ENCODE measurements at regions of chr1 and their contacts with region 1.

Region 1: DNA sequence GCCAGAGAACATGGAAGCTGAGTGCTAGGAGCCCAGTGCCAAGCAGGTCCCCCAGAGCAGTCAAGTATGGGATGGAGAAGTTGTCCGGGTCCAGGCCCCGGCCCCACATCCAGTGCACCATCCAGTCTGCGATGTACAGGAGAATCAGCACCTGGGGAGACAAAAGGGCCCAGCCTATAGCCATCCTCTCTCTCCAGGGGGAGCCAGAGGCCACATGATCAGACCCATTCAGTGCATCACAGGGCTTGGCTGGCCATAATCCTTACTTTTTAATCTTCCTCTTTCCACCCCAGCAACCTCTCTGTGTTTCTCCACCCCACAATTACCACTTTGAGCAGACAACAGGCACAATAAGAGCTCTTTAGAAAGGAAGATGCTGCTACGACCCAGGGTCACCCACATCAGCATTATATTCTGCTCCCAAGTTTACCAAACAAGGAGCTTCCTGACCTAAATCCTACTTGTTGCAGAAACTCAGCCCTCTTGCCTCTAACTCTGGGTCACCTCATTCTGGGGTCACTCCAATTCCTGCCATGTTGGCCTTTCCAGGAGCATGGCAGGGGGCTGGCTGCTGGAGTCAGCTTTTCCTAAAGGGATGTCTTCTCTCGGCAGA is 16.4 kb upstream of the RAB29 start:
- DNase-seq: peak; percentile 76
- H3K4me3 Mint-ChIP-seq: no peak overlapping the region
- H3K27ac Mint-ChIP-seq: no peak overlapping the region
- H3K4me1 Mint-ChIP-seq: no peaks in the 10 kb centered on the region
- H3K27me3 Mint-ChIP-seq: no peaks in the 10 kb centered on the region

Region 2: DNA sequence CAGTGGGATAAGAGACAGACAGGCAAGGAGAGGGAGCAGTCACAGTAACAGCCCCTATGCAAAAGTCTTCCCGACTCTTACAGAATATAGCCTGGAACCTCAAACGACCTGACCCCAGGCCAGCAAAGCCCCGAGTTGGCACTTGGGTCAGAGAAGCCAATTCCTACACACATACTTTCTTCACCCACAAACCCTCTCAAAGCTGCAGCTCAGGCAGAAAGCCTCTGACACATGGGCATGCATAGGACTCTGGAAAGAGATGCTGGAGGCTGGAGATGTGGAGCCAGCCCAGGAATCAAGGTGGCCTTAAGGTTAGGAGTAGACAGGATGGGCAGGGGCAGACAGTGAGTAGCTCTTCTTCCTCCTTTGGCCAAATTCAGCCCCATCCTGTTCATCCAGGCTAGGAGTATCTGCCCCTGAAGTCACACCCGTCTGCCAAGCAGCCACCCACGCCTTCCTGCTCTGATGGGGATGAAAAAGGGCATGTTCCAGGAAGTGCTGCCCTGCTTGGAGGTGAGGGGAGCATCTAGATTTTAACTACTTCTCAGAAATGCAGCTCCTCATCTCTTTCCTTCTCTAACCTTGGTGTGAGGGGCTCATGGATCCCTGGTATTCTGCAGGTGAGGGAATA is 13.5 kb after region 1 on chr1:
- CTCF ChIA-PET with region 1: interaction called, 23 read pairs
- DNase-seq: peak; percentile 41
- H3K4me3 Mint-ChIP-seq: no peak overlapping the region
- H3K27ac Mint-ChIP-seq: no peak overlapping the region
- H3K4me1 Mint-ChIP-seq: peaks cover 39% of the 10 kb centered on the region
- H3K27me3 Mint-ChIP-seq: no peaks in the 10 kb centered on the region

Region 3: DNA sequence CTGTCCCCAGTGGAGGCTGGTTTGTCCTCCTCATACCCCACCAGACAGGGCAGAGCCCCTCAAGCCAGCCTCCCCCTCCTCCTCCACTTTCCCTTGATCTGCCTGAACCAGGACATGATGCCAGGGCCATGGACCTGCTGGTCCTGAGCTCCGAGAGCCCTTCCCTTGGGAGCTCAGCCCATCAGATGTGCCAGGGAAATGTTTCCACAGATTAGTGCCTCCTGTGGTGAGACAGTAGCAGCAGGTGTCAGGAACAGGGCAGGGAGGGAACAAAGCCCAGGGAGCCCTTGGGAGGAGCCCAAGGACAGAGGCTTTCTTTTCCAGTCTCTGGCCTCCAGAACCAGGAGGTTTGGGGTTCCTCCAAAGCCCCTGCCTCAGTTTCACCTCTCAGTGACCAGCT is 35.9 kb after region 1 on chr1:
- CTCF ChIA-PET with region 1: interaction called, 14 read pairs
- DNase-seq: no peak
- H3K4me3 Mint-ChIP-seq: no peak overlapping the region
- H3K27ac Mint-ChIP-seq: no peak overlapping the region
- H3K4me1 Mint-ChIP-seq: peaks cover 10% of the 10 kb centered on the region
- H3K27me3 Mint-ChIP-seq: peaks cover 28% of the 10 kb centered on the region

Region 4: DNA sequence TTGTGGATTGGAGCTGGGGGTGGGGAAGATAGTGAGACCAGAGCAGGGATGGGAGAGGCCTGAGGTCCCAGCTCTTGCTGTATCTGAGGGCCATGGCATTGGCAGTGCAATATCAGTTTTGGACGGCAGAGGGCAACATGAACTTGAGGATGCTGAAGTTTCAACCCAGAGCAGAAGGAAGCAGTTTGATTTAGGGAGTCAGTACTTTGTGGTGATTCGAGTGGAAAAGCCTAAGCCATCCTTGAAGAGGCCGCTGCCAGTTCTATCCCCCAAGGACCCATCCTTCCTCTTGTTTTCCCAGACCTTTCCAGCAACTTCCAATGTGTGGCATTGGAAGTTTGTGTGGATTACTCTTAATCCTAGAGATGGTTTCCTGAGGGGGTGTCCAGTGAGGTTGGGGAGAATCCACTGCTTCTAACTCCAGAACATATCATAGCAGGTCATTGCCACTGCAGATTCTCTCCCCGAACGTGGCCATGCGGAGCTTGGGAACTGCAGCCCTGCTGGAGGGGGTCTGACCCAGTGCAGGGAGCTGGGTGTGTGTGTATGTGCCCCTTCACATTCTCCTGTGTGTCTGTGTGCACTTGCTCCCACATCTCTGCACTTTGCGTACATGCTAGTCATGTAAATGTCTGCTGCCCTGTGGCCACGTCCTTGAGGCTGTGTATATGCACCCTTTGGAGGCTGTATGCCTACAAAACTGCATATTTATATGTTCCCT is 127.5 kb after region 1 on chr1:
- CTCF ChIA-PET with region 1: interaction called, 27 read pairs
- DNase-seq: peak; percentile 84
- H3K4me3 Mint-ChIP-seq: no peak overlapping the region
- H3K27ac Mint-ChIP-seq: no peak overlapping the region
- H3K4me1 Mint-ChIP-seq: no peaks in the 10 kb centered on the region
- H3K27me3 Mint-ChIP-seq: peaks cover 22% of the 10 kb centered on the region

Region 5: GRCh38 chr1:205961405-205961804 is 169.7 kb after region 1 on chr1:
- CTCF ChIA-PET with region 1: no interaction called
- DNase-seq: peak; percentile 26
- H3K4me3 Mint-ChIP-seq: no peak overlapping the region
- H3K27ac Mint-ChIP-seq: no peak overlapping the region
- H3K4me1 Mint-ChIP-seq: peaks cover 2% of the 10 kb centered on the region
- H3K27me3 Mint-ChIP-seq: peaks cover 67% of the 10 kb centered on the region

Measured in activated naive CD4-positive, alpha-beta T cell treated with anti-CD3 and anti-CD28 coated beads, Interleukin-2, amount 10 ng/mL, durations not matched to agents 7 days and 5 days (primary cell).